Activated CD8-positive, alpha-beta T cell treated with anti-CD3 and anti-CD28 coated beads, Interleukin-2, amount 10 ng/mL, durations not matched to agents 7 days and 5 days (primary cell): ENCODE measurements at regions of chr15 and their contacts with region 1.

Region 1: GRCh38 chr15:40593588-40594428 is at the start of gene KNL1:
- DNase-seq: peak; percentile 95
- ATAC-seq: peak; percentile 85
- H3K4me3 Mint-ChIP-seq: peak within 1 kb of the TSS; percentile 87
- H3K27ac Mint-ChIP-seq: peak within 1 kb of the TSS; percentile 99
- H3K4me1 Mint-ChIP-seq: peaks cover 50% of the 10 kb centered on the region
- H3K27me3 Mint-ChIP-seq: peaks cover 2% of the 10 kb centered on the region
- total RNA-seq, gene KNL1: 61.4 to 65.4 TPM

Region 2: DNA sequence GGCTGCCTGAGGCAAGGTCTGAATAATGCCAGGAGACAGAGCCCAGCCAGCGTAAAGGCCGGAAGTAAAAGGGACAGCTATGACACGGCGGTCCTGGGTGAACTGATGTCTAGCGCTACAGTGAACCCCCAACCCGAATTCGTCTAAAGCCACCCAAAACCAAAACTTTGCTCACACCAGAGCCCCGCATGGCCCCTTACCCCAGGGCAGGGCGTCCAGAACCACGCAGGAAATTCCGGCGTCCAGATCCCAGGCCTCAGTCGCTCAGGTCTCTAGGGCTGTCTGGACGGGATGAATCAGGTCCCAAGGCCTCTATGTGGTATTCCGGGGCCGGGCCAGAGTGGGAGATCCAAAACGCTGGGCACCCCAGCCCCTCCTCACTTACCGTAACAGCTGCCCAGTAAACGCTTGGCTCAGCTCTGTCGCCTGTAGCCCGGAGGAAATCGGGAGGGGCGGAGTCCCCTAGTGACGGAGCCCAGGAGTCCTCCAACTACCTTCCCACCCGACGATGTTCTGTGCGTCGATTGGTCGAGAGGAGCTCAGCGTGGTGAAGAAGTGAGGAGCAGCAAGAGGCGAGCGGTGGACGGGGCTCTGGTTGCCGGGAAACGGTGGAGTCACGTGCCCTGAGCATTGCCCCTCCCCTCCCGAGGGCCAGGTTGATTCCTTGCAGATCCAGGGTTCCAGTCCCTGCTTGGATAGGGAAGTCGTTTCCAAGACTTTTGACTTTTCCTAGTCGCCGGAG is 29.0 kb before region 1 on chr15 and contains the start of gene CCDC32:
- CTCF ChIA-PET with region 1: interaction called, 30 read pairs
- POLR2A ChIA-PET with region 1: interaction called, 20 read pairs
- DNase-seq: peak; percentile 99
- ATAC-seq: peak; percentile 95
- H3K4me3 Mint-ChIP-seq: peak within 1 kb of the TSS; percentile 96
- H3K27ac Mint-ChIP-seq: peak within 1 kb of the TSS; percentile 97
- H3K4me1 Mint-ChIP-seq: peaks cover 46% of the 10 kb centered on the region
- H3K27me3 Mint-ChIP-seq: no peaks in the 10 kb centered on the region
- total RNA-seq, gene CCDC32: 24.7 to 27.0 TPM